ENCODE measurements at regions of chr10 and their contacts with region 1.

Region 1: DNA sequence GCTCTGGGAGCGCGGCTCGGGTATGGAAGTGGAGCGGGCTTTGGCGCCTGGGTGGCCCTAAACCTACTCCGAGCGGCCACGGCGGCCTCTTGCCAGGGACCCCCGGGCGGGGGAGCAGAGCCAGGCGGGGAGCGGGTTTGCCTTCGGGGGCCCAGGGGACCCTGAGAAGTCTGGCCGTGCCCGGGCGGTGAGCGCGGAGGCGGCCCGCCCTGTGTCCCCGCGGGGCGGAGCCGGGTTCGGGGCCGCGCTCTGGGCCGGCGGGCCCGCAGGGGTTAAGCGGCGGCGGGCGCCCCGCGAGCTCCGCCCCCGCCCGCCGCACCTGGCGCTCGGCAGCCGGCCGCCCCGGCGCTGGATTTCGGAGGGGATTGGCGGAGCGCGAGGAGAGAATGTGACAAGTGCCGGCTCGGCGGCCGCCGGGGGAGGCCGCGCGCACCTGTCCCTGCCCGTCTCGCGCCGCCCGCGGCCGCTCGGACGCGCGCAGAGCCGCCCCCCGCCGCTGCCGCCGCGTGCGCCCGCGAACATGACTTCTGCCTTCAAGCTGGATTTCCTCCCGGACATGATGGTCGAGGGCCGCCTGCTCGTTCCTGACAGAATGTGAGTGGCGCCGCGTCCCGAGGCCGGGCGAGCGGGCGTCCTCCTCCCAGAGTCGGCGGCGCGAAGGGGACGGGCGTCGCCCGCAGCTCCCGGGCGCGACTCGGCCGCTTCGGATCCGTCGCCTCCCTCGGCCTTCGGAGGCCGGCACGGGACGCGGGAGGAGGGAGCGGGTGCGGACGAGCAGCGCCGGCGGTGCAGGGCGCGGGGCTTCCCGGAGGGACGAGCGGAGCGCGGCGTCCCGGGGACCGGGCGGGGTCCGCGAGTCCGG is at the start of gene CELF2:
- DNase-seq: peak; percentile 70 to 84 (median 82)
- ATAC-seq: peak; percentile 51 to 89 (median 76)
- H3K4me3 ChIP-seq: peak within 1 kb of the TSS; percentile 63 to 83 (median 76)
- H3K27ac ChIP-seq: peak within 1 kb of the TSS; percentile 75 to 95 (median 92)
- H3K4me1 ChIP-seq: peaks cover 0 to 72% (median 32%) of the 10 kb centered on the region in 12 donors
- H3K27me3 ChIP-seq: peaks cover 0 to 46% (median 0%) of the 10 kb centered on the region in 9 donors
- CTCF ChIP-seq: no peak
- POLR2A ChIP-seq: peak in 1 of 2 donors; percentile 15
- total RNA-seq, gene CELF2: 61.2 to 103 (median 73.3) TPM

Region 2: DNA sequence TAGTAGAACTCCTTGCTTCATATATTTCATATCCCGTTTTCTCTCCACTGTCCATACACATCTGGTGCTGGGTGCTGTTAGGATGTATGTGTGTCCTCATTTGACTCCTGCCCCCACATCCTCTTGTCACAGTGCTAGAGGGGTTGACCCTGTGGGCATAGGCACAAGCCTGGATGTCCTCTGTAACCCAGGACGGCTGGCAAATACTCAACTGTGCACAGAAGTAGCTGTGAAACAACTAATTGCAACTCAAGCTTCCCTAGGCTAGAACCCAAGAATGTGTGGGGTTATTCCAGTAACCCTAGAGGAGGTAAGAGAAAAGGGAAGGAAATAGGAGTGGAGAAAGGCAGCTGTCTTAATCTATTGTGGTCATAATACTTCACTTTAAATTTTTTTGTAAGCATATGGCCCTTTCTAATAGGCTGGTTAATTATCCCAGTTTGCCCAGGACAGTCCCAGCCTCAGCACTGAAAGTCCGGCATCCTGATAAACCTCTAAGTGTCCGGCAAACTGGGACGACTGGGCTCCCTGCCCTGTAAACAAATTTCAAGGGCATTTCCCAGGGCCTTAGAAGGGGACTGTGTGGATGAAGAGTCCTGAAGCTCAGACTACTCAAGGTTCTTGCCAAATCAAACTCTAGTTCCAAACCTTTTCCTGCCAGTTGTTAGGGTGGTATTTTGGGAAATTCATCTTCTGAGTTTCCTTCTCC is 283.3 kb before region 1 on chr10:
- intact Hi-C with region 1: loop called in 1 of 10 experiments (anchors 10 kb)
- DNase-seq: no peak
- ATAC-seq: peak in 2 of 4 donors; percentile 31 to 45
- H3K4me3 ChIP-seq: no peak overlapping the region
- H3K27ac ChIP-seq: no peak overlapping the region
- H3K4me1 ChIP-seq: peaks cover 0 to 11% (median 0%) of the 10 kb centered on the region in 12 donors
- H3K27me3 ChIP-seq: no peaks in the 10 kb centered on the region
- CTCF ChIP-seq: no peak
- POLR2A ChIP-seq: no peak

Region 3: GRCh38 chr10:10798102-10798863 is 219.5 kb before region 1 on chr10:
- intact Hi-C with region 1: loop called in 5 of 10 experiments (anchors 5 to 10 kb)
- DNase-seq: peak in 1 of 5 donors; percentile 26
- ATAC-seq: peak; percentile 37 to 69 (median 50)
- H3K4me3 ChIP-seq: peak overlapping the region in 11 of 12 donors; percentile 6 to 53 (median 34)
- H3K27ac ChIP-seq: peak overlapping the region; percentile 67 to 91 (median 81)
- H3K4me1 ChIP-seq: peaks cover 0 to 65% (median 30%) of the 10 kb centered on the region in 12 donors
- H3K27me3 ChIP-seq: no peaks in the 10 kb centered on the region
- CTCF ChIP-seq: peak in 2 of 12 donors; percentile 5 to 19
- POLR2A ChIP-seq: no peak

Region 4: DNA sequence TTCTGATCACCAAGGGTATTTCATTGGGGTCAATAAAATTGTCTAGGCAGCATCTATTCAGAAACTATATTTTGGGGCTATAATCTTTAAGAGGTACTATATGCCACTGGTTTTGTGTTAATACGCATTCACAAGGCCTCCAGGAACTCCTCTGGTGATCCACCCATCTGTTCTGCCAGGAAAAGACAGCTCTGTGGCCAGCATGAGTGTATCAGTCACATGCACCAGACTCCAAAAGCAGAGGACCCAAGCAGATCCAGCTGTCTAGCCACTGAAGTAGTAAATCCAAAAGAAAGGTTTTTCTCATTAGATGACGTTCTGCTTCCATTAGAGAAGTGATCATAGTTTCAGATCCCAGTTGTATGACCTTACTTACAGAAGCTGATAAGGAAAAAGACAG is 199.7 kb before region 1 on chr10:
- intact Hi-C with region 1: loop called in 1 of 10 experiments (anchors 10 kb)
- DNase-seq: peak in 2 of 5 donors; percentile 56 to 58
- ATAC-seq: peak; percentile 74 to 83 (median 79)
- H3K4me3 ChIP-seq: no peak overlapping the region
- H3K27ac ChIP-seq: peak overlapping the region in 8 of 12 donors; percentile 9 to 67 (median 31)
- H3K4me1 ChIP-seq: peaks cover 0 to 29% (median 14%) of the 10 kb centered on the region in 12 donors
- H3K27me3 ChIP-seq: no peaks in the 10 kb centered on the region
- CTCF ChIP-seq: no peak
- POLR2A ChIP-seq: no peak

Region 5: GRCh38 chr10:10891124-10892082 is 126.4 kb before region 1 on chr10:
- intact Hi-C with region 1: loop called in 1 of 10 experiments (anchors 5 kb)
- DNase-seq: peak in 1 of 5 donors; percentile 31
- ATAC-seq: peak in 3 of 4 donors; percentile 32 to 64 (median 60)
- H3K4me3 ChIP-seq: no peak overlapping the region
- H3K27ac ChIP-seq: peak overlapping the region in 3 of 12 donors; percentile 59 to 67 (median 61)
- H3K4me1 ChIP-seq: peaks cover 0 to 31% (median 14%) of the 10 kb centered on the region in 12 donors
- H3K27me3 ChIP-seq: no peaks in the 10 kb centered on the region
- CTCF ChIP-seq: no peak
- POLR2A ChIP-seq: no peak

Region 6: DNA sequence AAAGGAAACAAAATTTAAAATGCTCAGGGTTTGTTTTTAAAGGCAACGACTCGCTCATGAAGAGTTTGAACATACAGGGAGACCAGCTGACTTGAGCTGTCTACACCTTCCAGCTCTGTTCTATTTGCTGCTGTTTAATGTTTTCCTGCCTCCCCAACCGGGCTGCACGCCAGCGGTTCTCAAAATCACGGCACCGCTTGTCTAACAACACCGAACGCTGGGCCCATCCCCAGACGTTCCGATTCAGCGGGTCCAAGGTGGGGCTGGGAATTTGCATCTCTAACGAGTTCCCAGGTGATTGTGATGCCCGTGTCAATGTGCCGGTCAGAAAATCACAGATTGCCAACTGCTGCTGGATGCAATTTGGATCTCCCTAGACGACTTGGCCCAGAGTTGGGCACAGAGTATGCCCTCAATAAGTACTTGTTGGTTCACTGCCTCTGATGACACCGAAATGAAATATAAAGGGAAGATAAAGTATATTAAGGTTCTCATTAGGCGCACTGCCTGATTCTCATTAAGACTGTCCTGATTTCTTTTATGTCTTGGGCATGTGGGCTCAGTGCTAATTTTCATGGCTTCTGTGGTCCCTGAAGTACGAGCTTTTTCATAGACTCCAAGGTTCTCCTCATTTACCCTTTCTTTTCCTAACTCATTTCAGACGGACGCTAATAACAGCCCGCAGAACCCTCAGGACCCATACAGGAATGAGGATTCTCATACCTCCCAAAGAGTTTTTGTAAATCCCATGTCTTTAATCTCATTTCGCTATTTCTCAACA is 28.4 kb after region 1 on chr10:
- intact Hi-C with region 1: no loop called
- DNase-seq: peak; percentile 63 to 87 (median 81)
- ATAC-seq: peak; percentile 68 to 82 (median 78)
- H3K4me3 ChIP-seq: peak overlapping the region in 8 of 12 donors; percentile 8 to 41 (median 26)
- H3K27ac ChIP-seq: peak overlapping the region; percentile 55 to 87 (median 79)
- H3K4me1 ChIP-seq: peaks cover 0 to 92% (median 64%) of the 10 kb centered on the region in 12 donors
- H3K27me3 ChIP-seq: no peaks in the 10 kb centered on the region
- CTCF ChIP-seq: no peak
- POLR2A ChIP-seq: no peak

Region 7: GRCh38 chr10:11270135-11270857 is 252.5 kb after region 1 on chr10:
- intact Hi-C with region 1: loop called in 8 of 10 experiments (anchors 5 to 10 kb)
- DNase-seq: peak; percentile 83 to 89 (median 85)
- ATAC-seq: peak; percentile 94 to 98 (median 96)
- H3K4me3 ChIP-seq: no peak overlapping the region
- H3K27ac ChIP-seq: peak overlapping the region in 8 of 12 donors; percentile 16 to 53 (median 34)
- H3K4me1 ChIP-seq: peaks cover 0 to 40% (median 15%) of the 10 kb centered on the region in 12 donors
- H3K27me3 ChIP-seq: no peaks in the 10 kb centered on the region
- CTCF ChIP-seq: peak; percentile 83 to 97 (median 92)
- POLR2A ChIP-seq: no peak